ENCODE measurements at regions of chr1 and their contacts with region 1.

Region 1: DNA sequence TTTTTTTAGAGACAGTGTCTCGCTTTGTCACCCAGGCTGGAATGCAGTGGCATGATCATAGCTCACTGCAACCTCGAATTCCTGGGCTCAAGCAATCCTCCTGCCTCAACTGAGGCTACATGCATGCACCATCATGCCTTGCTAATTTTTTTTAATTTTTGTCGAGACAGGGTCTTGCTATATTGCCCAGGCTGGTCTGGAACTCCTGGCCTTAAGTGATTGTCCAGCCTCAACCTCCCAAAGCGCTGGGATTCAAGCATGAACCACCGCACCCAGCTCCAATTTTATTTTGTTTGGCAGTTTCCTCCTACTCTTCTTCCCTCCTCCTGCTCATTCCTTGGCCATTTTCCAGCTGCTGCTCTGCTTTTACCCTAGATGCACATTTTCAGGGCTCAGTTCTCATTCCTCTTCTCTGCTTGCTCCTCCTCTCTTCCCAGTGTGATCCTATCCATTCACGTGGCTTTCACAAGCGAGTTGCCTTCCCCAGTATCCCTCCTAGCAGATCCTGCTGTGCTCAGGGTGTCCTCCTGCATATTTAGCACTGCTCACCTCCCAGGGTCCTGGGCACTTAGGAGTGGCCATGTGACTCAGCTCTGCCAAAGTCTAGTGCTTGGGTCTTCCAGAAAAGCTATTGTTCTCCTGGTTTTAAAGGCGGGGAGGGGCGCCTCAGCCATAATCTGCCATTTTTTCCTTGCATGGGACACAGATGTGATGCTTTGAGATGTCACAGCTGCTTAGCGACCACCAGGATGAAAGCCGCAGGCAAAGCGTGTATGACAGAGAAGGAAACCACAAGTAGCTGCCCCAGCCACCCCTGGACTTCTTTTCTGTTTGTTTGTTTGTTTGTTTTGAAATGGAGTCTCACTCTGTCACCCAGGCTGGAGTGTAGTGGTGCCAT is 33.7 kb downstream of the PSEN2 start:
- DNase-seq: no peak
- ATAC-seq: no peak
- H3K4me3 ChIP-seq: no peak overlapping the region
- H3K4me3 Mint-ChIP-seq: no peak overlapping the region
- H3K27ac ChIP-seq: no peak overlapping the region
- H3K27ac Mint-ChIP-seq: no peak overlapping the region
- H3K4me1 ChIP-seq: no peaks in the 10 kb centered on the region
- H3K4me1 Mint-ChIP-seq: no peaks in the 10 kb centered on the region
- H3K27me3 ChIP-seq: no peaks in the 10 kb centered on the region
- H3K27me3 Mint-ChIP-seq: no peaks in the 10 kb centered on the region
- CTCF ChIP-seq: no peak

Region 2: GRCh38 chr1:226934483-226935237 is 30.6 kb after region 1 on chr1:
- CTCF ChIA-PET with region 1: no interaction called
- POLR2A ChIA-PET with region 1: no interaction called
- intact Hi-C with region 1: loop called in 1 of 2 experiments (anchors 1 kb)
- DNase-seq: no peak
- ATAC-seq: no peak
- H3K4me3 ChIP-seq: no peak overlapping the region
- H3K4me3 Mint-ChIP-seq: no peak overlapping the region
- H3K27ac ChIP-seq: no peak overlapping the region
- H3K27ac Mint-ChIP-seq: no peak overlapping the region
- H3K4me1 ChIP-seq: peaks cover 7% of the 10 kb centered on the region
- H3K4me1 Mint-ChIP-seq: peaks cover 7% of the 10 kb centered on the region
- H3K27me3 ChIP-seq: no peaks in the 10 kb centered on the region
- H3K27me3 Mint-ChIP-seq: no peaks in the 10 kb centered on the region
- CTCF ChIP-seq: no peak